Transverse colon (tissue), 4 donors: ENCODE measurements at regions of chrX and their contacts with region 1.

Region 1: DNA sequence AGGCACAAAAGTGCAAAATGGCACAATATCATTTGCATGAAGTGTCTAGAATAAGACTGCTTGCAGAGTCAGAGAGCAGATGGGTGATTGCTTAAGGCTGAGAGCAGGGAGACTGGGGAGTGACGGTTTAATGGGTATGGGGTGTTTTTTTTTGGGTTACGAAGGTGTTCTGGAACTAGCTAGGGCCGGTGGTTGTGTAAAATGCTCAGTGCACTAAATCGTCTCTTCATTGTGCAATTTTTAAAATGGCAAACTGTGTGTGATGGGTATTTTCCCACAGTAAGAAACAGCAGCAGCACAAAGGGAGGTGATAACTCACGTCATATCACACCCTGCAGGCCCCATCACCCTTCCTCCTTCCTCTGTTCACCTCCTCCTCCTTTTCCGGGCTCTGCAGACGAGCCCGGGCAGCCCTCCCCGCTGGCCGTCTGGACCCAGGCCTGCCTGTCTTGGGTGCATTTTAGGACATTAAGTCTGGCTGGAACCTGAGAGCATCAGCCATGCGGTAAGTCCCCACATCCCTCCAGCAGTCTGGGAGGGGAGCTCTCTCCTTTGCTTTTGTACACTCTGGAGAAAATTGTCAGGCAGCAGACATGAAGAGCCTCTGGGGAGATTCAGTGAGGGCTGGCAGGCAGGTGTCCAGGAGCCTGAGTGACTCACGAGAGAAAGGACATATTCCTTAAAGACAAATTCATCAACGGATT is 42.7 kb downstream of the ASMT start:
- DNase-seq: peak; percentile 17
- H3K4me3 ChIP-seq: peak overlapping the region in 1 of 4 donors; percentile 13
- H3K27ac ChIP-seq: peak overlapping the region in 2 of 4 donors; percentile 30 to 66
- H3K4me1 ChIP-seq: no peaks in the 10 kb centered on the region
- H3K27me3 ChIP-seq: no peaks in the 10 kb centered on the region
- CTCF ChIP-seq: no peak
- EP300 ChIP-seq: no peak
- POLR2A ChIP-seq: peak; percentile 36

Region 2: DNA sequence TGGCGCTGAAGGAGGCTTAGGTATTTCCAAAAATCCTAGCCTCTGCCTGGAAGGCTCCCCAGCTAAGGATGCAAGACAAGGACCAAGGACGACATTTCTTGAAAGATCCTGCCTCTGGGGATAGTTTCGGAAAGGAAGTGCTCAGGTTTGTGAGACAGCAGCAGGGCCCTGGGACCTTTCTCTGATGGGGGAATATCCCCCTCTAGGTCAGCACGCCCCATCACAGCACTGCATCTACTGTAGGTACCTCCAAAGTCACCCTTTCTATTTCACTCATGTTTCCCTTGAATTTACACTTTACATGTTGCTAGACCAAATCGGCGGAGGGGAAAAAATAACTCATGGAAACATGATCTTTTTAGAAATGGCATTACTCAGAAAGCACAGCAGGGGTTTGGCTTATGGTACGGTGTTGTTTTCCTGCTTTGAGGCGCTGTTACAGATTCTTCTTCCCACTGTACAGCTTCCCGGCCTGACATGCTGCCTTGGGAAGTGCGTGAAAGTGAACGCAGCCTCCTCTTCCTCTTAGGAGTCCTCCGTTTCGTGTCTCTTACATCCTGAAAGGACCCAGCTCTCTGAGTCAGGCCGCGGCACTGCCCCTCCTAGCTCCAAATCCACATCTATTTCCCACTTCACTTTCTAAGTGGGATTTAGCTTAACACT is 920.5 kb after region 1 on chrX:
- in situ Hi-C with region 1: loop called in 3 of 4 experiments (anchors 25 kb)
- intact Hi-C with region 1: no loop called
- DNase-seq: no peak
- H3K4me3 ChIP-seq: no peak overlapping the region
- H3K27ac ChIP-seq: no peak overlapping the region
- H3K4me1 ChIP-seq: no peaks in the 10 kb centered on the region
- H3K27me3 ChIP-seq: peaks cover 25% of the 10 kb centered on the region
- CTCF ChIP-seq: no peak
- EP300 ChIP-seq: no peak
- POLR2A ChIP-seq: no peak

Region 3: GRCh38 chrX:2608638-2609430 is 951.3 kb after region 1 on chrX:
- in situ Hi-C with region 1: loop called in 1 of 4 experiments (anchors 10 kb)
- intact Hi-C with region 1: no loop called
- DNase-seq: peak; percentile 93
- H3K4me3 ChIP-seq: peak overlapping the region; percentile 64 to 92 (median 82)
- H3K27ac ChIP-seq: peak overlapping the region; percentile 83 to 90 (median 86)
- H3K4me1 ChIP-seq: peaks cover 0 to 22% (median 13%) of the 10 kb centered on the region in 4 donors
- H3K27me3 ChIP-seq: no peaks in the 10 kb centered on the region
- CTCF ChIP-seq: no peak
- EP300 ChIP-seq: no peak
- POLR2A ChIP-seq: peak; percentile 67